Pancreas (tissue), 10 donors: ENCODE measurements at regions of chr6 and their contacts with region 1.

Region 1: GRCh38 chr6:33579828-33580714 is at the start of gene BAK1:
- DNase-seq: peak; percentile 85 to 95 (median 86)
- ATAC-seq: peak; percentile 91 to 97 (median 96)
- H3K4me3 ChIP-seq: peak within 1 kb of the TSS; percentile 67 to 95 (median 72)
- H3K27ac ChIP-seq: peak within 1 kb of the TSS; percentile 7 to 74 (median 56)
- H3K4me1 ChIP-seq: peaks cover 0 to 11% (median 10%) of the 10 kb centered on the region in 3 donors
- H3K27me3 ChIP-seq: no peaks in the 10 kb centered on the region
- CTCF ChIP-seq: peak; percentile 14 to 41 (median 28)
- total RNA-seq, gene BAK1: 5.6 to 11.2 (median 6.9) TPM

Region 2: DNA sequence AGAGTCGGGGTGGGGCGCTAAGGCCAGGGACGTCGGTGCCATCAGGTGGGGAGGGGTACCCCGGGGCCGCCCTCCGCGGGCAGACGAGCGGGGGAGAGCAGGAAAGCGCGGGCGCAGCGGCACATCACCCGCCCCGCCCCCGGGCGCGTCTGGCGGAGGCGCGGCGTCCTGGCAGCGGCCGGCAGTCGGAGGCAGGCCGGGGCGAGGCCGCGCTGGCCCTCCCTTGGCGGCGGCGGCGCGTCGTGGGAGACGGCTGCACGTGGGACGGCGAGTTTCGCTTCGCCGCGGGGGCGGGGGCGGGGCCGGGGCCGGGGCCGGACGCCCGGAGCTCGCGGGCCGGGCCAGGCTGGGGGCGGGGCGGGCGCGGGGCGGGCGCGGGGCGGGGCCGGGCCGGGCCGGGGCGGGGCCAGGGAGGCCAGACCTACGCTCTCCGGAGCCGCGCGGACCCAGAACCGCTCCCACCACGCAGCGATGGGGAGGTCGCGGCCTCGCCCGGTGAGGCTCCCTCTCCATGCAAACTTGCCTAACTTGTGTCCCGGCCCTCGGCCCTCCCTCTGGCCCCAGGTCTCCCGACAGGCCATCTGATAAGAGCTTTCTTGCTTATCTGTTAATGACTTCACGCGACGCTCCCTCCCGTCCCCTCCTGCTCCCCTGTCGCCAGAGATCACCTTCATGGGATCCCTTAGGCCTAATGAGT is 53.5 kb after region 1 on chr6:
- intact Hi-C with region 1: loop called in 1 of 3 experiments (anchors 10 kb)
- DNase-seq: peak; percentile 47 to 82 (median 71)
- ATAC-seq: peak; percentile 77 to 87 (median 86)
- H3K4me3 ChIP-seq: peak overlapping the region; percentile 6 to 46 (median 30)
- H3K27ac ChIP-seq: peak overlapping the region in 2 of 4 donors; percentile 42 to 48
- H3K4me1 ChIP-seq: peaks cover 0 to 6% (median 4%) of the 10 kb centered on the region in 3 donors
- H3K27me3 ChIP-seq: no peaks in the 10 kb centered on the region
- CTCF ChIP-seq: no peak

Region 3: DNA sequence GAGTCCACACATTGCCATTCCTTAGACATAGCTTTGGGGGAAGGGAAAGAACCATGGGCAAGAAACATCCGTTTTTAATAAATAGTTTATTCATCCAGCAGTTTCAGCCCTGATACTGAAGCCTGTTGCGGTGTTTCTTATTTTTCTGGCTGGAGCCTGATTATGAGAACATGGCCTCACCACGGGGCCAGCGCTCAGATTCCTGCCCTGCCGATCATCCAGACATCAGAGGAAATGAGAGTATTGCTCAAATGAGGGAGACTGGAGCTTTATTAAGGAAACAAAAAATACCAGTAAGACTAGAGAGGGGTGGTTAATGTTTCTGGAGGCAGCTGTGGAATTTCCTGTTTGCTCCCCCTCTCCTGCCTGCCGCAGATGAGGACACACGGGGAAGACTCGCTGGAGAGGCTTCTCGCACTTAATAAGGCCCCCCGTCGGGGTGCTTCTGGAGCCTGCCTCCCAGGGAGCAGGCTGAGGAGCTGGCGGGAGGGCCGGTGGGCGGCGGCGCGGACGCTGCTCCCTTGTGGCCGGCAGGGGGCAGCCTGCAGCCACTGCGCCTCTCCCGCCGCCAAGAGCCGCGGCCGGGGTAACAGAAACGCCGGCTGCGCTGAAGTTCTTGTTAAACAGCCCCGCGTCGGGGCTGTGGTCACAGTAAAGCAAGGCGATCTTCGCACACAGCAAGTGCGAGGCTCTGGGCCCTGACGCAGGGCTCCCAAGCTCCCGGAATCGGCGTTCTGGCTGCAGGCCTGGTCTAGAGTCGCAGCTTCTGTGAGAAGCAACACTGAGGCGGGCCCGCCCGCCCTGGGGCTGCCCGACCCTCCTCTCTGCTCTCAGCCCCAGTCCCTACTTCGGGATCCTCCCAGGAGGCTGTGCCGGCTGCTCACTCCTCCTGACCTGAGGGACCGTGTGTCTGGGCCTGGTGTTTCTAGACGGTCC is 191.3 kb after region 1 on chr6:
- intact Hi-C with region 1: loop called in 1 of 3 experiments (anchors 10 kb)
- DNase-seq: peak; percentile 32 to 89 (median 71)
- ATAC-seq: peak; percentile 67 to 88 (median 84)
- H3K4me3 ChIP-seq: no peak overlapping the region
- H3K27ac ChIP-seq: peak overlapping the region in 3 of 4 donors; percentile 28 to 54 (median 37)
- H3K4me1 ChIP-seq: peaks cover 0 to 4% (median 0%) of the 10 kb centered on the region in 3 donors
- H3K27me3 ChIP-seq: no peaks in the 10 kb centered on the region
- CTCF ChIP-seq: peak; percentile 92 to 95 (median 94)

Region 4: GRCh38 chr6:34154668-34155447 is 574.8 kb after region 1 on chr6:
- intact Hi-C with region 1: loop called in 1 of 3 experiments (anchors 10 kb)
- DNase-seq: peak in 4 of 6 donors; percentile 19 to 89 (median 56)
- ATAC-seq: peak; percentile 80 to 96 (median 92)
- H3K4me3 ChIP-seq: peak overlapping the region in 1 of 4 donors; percentile 28
- H3K27ac ChIP-seq: no peak overlapping the region
- H3K4me1 ChIP-seq: peaks cover 0 to 5% (median 0%) of the 10 kb centered on the region in 3 donors
- H3K27me3 ChIP-seq: peaks cover 0 to 3% (median under 1%) of the 10 kb centered on the region in 4 donors
- CTCF ChIP-seq: peak; percentile 89 to 97 (median 93)